Heart right ventricle (tissue), 16 donors: ENCODE measurements at regions of chr14 and their contacts with region 1.

Region 1: DNA sequence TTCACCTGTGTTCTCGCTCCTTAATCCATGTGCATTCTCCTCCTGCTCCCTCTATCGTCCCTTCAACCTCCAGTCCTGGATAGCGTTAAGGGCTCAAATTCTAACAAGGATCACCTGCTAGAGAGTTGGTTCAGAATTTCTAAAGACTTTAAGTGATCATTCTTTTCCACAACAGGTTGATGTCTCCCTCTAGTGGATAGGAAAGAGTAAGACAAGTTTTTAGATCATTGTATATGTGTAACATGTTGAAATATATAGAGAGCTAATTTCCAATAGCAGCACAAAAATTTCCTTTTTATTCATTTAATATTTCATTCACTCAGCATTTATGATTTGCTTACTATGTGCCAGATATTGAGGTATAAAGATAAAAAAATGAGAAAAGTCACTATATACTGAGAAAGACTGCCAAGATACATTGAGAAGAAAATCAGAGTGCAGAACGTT is 9.3 kb upstream of the ESR2 start:
- DNase-seq: no peak
- ATAC-seq: peak in 6 of 8 donors; percentile 11 to 61 (median 51)
- H3K4me3 ChIP-seq: no peak overlapping the region
- H3K27ac ChIP-seq: no peak overlapping the region
- H3K4me1 ChIP-seq: no peaks in the 10 kb centered on the region
- H3K27me3 ChIP-seq: no peaks in the 10 kb centered on the region
- CTCF ChIP-seq: peak; percentile 68 to 88 (median 77)

Region 2: DNA sequence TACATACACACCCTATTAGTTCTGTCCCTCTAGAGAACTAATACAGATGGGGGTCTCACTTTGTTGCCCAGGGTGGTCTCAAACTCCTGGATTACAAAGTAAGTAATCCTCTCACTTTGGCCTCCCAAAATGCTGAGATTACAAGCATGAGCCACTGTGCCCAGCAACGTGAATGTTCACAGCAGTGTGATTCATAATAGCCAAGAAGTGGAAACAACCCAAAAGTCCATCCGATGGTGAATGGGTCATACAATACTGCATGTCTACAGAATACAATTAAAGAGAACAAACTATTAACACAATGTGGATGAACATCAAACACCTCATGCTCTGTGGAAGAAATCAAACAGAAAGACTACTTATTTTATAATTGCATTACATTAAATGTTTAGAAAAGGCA is 508.0 kb before region 1 on chr14:
- intact Hi-C with region 1: loop called in 8 of 10 experiments (anchors 5 to 10 kb)
- DNase-seq: no peak
- ATAC-seq: no peak
- H3K4me3 ChIP-seq: no peak overlapping the region
- H3K27ac ChIP-seq: no peak overlapping the region
- H3K4me1 ChIP-seq: peaks cover 0 to 9% (median 0%) of the 10 kb centered on the region in 9 donors
- H3K27me3 ChIP-seq: no peaks in the 10 kb centered on the region
- CTCF ChIP-seq: no peak

Region 3: GRCh38 chr14:63800651-63801375 is 502.7 kb before region 1 on chr14:
- intact Hi-C with region 1: loop called in 8 of 10 experiments (anchors 5 to 10 kb)
- DNase-seq: no peak
- ATAC-seq: no peak
- H3K4me3 ChIP-seq: no peak overlapping the region
- H3K27ac ChIP-seq: no peak overlapping the region
- H3K4me1 ChIP-seq: peaks cover 0 to 9% (median 0%) of the 10 kb centered on the region in 9 donors
- H3K27me3 ChIP-seq: no peaks in the 10 kb centered on the region
- CTCF ChIP-seq: no peak

Region 4: DNA sequence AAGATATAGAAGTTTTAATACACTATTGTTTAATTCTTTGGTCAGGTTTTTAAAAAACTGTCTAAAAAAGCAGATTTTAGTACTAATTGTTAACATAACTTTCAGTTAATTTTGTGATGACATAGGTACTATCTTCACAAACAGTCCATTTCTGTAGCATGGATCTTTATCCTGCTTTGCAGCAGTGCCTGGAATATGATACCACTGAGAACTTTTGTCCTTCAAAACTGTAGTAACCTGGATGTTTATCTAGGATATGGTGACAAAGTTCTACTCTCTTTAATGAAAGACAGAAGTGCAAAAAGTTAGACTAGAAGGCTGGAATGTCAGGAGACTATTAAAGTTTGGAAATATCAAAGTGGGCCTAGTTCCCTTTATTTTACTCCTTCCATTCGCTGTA is 290.8 kb before region 1 on chr14:
- intact Hi-C with region 1: loop called in 3 of 10 experiments (anchors 10 kb)
- DNase-seq: no peak
- ATAC-seq: no peak
- H3K4me3 ChIP-seq: no peak overlapping the region
- H3K27ac ChIP-seq: no peak overlapping the region
- H3K4me1 ChIP-seq: no peaks in the 10 kb centered on the region
- H3K27me3 ChIP-seq: no peaks in the 10 kb centered on the region
- CTCF ChIP-seq: no peak

Region 5: DNA sequence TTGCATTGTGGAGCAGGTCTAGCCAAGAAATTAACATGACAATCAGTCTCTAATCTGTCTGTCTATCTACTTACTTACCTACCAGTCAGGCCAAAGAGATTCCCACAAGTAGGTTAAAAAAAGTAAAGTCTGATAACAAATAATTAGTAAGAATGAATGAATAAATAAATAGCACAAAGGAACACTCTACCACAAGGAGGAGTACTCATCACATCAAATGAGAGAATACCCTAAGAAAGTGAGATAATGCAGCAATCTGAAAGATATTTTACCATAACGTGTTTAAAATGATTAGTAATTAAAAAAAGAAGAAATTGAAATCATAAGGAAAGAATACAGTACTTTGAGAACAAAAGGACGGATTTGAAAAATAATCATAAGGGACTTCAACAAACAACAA is 263.4 kb before region 1 on chr14:
- intact Hi-C with region 1: loop called in 2 of 10 experiments (anchors 10 kb)
- DNase-seq: no peak
- ATAC-seq: no peak
- H3K4me3 ChIP-seq: no peak overlapping the region
- H3K27ac ChIP-seq: no peak overlapping the region
- H3K4me1 ChIP-seq: peaks cover 0 to 9% (median 0%) of the 10 kb centered on the region in 9 donors
- H3K27me3 ChIP-seq: no peaks in the 10 kb centered on the region
- CTCF ChIP-seq: peak in 5 of 9 donors; percentile 17 to 44 (median 28)

Region 6: DNA sequence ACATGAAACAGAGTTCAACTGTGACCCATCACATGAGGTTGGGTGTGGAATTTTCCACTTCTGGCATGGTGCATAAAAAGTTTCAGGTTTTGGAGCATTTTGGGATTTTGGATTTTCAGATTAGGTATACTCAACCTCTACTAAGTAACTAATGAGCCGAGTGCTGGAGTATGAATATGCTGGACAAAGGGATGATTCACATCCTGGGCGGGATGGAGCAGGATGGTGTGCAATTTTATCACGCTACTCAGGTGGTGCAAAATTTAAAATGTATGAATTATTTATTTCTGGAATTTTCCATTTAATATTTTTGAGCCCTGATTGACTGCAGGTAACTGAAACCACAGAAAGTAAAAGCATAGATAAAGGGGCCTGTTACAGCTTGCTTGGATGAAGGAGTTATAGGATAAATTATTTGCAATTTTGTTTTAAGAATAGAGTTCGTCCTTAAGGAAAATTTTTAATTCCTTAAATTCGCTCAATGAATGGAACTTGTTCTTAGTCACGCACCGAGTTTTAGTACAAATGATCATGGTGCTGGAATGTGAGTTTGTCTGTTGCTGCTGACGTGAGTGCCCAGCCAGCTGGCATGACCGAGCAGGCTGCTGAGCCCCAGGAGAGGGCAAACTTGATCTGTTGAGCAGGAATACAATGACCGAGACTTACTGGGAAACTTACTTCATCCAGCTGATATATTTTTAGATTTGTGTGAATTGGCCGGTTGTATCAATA is 185.7 kb before region 1 on chr14:
- intact Hi-C with region 1: no loop called
- DNase-seq: peak; percentile 52 to 74
- ATAC-seq: peak; percentile 86 to 98 (median 94)
- H3K4me3 ChIP-seq: no peak overlapping the region
- H3K27ac ChIP-seq: peak overlapping the region in 9 of 10 donors; percentile 49 to 87 (median 75)
- H3K4me1 ChIP-seq: peaks cover 0 to 36% (median 8%) of the 10 kb centered on the region in 9 donors
- H3K27me3 ChIP-seq: no peaks in the 10 kb centered on the region
- CTCF ChIP-seq: peak in 3 of 9 donors; percentile 13 to 38 (median 24)

Region 7: DNA sequence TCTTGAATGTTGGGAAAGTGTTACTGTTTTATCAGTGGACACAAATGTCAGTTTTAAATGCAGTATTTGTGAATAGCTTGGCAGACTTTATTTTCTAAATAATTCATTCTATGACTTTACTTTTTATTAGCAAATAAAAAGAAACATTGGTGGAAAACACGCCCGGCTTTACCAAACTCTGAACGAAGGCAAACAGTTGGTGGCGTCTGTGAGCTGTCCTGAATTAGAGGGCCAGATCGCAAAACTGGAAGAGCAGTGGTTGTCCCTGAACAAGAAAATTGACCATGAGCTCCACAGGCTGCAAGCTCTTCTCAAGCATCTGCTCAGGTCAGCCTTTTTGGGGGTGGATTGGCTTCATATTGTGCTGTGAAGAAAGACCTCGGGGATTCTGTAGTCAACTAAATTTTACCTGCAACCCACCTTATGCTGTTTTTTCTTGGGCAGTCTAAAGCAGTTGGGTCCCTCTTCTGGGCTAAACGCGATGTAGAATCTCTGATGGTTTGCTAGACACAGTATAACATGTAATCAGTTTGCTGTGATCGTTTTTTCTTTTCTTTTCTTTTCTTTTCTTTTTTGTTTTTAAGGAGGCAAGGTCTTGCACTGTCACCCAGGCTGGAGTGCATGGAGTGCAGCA is 165.7 kb before region 1 on chr14:
- intact Hi-C with region 1: loop called in 5 of 10 experiments (anchors 5 to 10 kb)
- DNase-seq: no peak
- ATAC-seq: peak in 1 of 8 donors; percentile 49
- H3K4me3 ChIP-seq: no peak overlapping the region
- H3K27ac ChIP-seq: no peak overlapping the region
- H3K4me1 ChIP-seq: no peaks in the 10 kb centered on the region
- H3K27me3 ChIP-seq: no peaks in the 10 kb centered on the region
- CTCF ChIP-seq: peak in 8 of 9 donors; percentile 12 to 53 (median 34)

Region 8: DNA sequence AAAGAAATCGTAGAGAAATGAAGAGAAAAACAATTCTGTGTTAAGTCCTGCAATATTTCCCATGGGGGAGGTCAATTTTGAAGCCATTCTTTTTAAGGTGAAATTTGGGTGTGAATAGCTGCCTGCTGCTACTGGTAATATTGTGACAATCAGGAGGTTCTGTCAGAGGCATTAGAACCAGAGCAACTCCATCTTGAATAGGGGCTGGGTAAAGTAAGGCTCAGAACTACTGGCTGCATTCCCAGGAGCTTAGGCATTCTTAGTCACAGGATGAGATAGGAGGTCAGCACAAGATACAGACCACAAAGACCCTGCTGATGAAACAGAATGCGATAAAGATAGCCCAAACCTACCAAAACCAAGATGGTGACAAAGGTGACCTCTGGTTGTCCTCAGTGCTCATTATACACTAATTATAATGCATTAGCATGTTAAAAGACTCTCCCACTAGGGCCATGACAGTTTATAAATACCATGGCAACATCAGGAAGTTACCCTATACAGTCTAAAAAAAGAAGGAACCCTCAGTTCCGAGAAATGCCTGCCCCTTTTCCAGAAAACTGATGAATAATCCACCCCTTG is 59.9 kb after region 1 on chr14:
- intact Hi-C with region 1: no loop called
- DNase-seq: no peak
- ATAC-seq: no peak
- H3K4me3 ChIP-seq: no peak overlapping the region
- H3K27ac ChIP-seq: no peak overlapping the region
- H3K4me1 ChIP-seq: peaks cover 0 to 6% (median 0%) of the 10 kb centered on the region in 9 donors
- H3K27me3 ChIP-seq: no peaks in the 10 kb centered on the region
- CTCF ChIP-seq: no peak